Prostate gland (tissue), 2 donors: ENCODE measurements at regions of chr17 and their contacts with region 1.

Region 1: GRCh38 chr17:17141860-17142552 is 64.1 kb downstream of the PLD6 start:
- DNase-seq: peak; percentile 39
- H3K4me3 ChIP-seq: no peak overlapping the region
- H3K27ac ChIP-seq: no peak overlapping the region
- H3K4me1 ChIP-seq: no peaks in the 10 kb centered on the region
- H3K27me3 ChIP-seq: no peaks in the 10 kb centered on the region
- CTCF ChIP-seq: peak; percentile 81 to 88 (median 84)
- POLR2A ChIP-seq: no peak

Region 2: DNA sequence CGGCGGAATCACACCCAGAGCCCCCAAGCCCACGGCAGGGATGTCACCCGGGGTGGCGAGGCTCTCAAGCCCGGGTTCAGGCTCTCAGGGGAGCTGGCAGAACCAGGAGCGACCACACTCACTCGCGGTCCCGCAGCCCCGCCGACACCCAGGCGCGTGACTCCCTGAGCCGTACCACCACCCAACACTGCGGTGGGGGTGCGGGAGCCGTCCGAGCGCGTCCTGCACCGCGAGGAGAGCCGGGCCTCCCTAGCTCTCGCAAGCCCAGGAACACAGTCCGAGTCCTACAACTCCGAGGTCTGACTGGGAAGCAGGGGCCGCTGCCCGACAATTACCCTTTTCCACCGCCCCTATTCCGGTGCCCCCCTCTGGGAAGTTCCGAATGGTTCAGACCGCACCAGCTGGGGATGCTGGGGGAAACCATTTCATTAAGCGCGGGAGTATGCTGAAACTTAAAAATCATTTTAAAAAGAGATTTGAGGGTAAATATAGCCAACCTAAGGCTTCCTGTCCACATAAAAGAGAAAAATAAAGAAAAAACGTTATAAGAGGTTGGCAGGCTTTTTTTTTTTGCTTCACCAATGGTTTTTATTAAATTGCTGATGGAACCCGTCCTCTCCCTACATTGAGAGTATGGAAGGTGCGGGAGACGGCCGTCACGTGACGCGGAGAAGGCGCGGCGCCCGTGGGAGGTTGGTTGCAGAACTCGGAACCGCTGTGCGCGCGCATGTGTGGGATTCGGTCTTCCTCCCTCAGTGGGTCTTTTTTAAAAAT is 95.2 kb after region 1 on chr17 and contains the start of gene FLCN:
- intact Hi-C with region 1: loop called (anchors 5 kb)
- DNase-seq: peak; percentile 87
- H3K4me3 ChIP-seq: peak within 1 kb of the TSS; percentile 90 to 94
- H3K27ac ChIP-seq: peak within 1 kb of the TSS; percentile 94 to 97
- H3K4me1 ChIP-seq: peaks cover 3% of the 10 kb centered on the region
- H3K27me3 ChIP-seq: no peaks in the 10 kb centered on the region
- CTCF ChIP-seq: peak in 1 of 4 experiments; percentile 18
- POLR2A ChIP-seq: peak; percentile 83
- total RNA-seq, gene FLCN: 43.8 to 125 TPM

Region 3: DNA sequence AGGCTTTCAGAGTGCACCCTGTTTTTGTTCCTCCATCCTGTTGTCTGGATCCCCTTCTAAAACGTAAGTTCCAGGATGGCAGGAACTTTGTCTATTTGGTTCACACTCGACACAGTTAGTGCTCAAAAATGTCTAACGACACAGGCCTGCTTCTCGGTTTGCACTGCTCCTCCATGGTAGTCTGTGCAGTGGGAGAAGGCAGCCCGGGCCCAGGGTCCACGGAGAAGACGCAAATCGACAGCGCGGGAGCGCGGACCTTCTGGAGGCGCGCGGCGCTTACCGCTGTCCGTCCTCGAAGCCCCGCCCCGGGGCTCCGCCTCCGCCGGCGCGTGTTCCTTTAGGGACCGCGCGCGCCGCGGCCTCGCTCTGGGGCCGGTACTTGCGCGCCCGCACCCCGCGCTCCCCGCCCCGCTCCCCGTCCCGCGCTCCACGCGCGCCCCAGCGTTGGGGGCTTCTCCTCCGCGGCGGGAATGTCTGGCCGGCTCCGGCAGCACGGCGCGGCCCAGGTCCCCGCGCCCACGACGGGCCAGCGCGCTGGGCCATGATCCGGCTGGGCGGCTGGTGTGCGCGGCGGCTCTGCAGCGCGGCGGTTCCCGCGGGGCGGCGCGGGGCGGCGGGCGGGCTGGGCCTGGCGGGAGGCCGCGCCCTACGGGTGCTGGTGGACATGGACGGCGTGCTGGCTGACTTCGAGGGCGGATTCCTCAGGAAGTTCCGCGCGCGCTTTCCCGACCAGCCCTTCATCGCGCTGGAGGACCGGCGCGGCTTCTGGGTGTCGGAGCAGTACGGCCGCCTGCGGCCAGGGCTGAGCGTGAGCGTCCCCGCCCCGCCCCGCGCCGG is 161.2 kb after region 1 on chr17 and contains the start of gene NT5M:
- intact Hi-C with region 1: loop called (anchors 5 kb)
- DNase-seq: peak; percentile 78
- H3K4me3 ChIP-seq: peak within 1 kb of the TSS; percentile 49 to 53
- H3K27ac ChIP-seq: peak within 1 kb of the TSS; percentile 37 to 58
- H3K4me1 ChIP-seq: no peaks in the 10 kb centered on the region
- H3K27me3 ChIP-seq: no peaks in the 10 kb centered on the region
- CTCF ChIP-seq: no peak
- POLR2A ChIP-seq: peak; percentile 37
- total RNA-seq, gene NT5M: 7.6 to 35.2 TPM